PC-9 (cell line): ENCODE measurements at regions of chr1 and their contacts with region 1.

Region 1: GRCh38 chr1:202926720-202927491 is at the start of gene KLHL12:
- DNase-seq: peak; percentile 84 to 96
- H3K4me3 ChIP-seq: peak within 1 kb of the TSS; percentile 80
- H3K27ac ChIP-seq: peak within 1 kb of the TSS; percentile 74
- H3K4me1 ChIP-seq: peaks cover 14% of the 10 kb centered on the region; the same call in 1 of the 2 replicates
- H3K27me3 ChIP-seq: no peaks in the 10 kb centered on the region
- CTCF ChIP-seq: peak; percentile 80
- total RNA-seq, gene KLHL12: 29.6 and 33.1 TPM in 2 replicates

Region 2: GRCh38 chr1:202213361-202214088 is 713.4 kb before region 1 on chr1:
- CTCF ChIA-PET with region 1: interaction called, 10 read pairs
- POLR2A ChIA-PET with region 1: interaction called, 3 read pairs
- intact Hi-C with region 1: no loop called
- DNase-seq: no peak
- H3K4me3 ChIP-seq: peak overlapping the region; percentile 53; the same call in 1 of the 2 replicates
- H3K27ac ChIP-seq: no peak overlapping the region
- H3K4me1 ChIP-seq: peaks cover 4% of the 10 kb centered on the region; the same call in 1 of the 2 replicates
- H3K27me3 ChIP-seq: peaks cover 60% of the 10 kb centered on the region
- CTCF ChIP-seq: peak; percentile 63; the same call in 1 of the 2 replicates

Region 3: DNA sequence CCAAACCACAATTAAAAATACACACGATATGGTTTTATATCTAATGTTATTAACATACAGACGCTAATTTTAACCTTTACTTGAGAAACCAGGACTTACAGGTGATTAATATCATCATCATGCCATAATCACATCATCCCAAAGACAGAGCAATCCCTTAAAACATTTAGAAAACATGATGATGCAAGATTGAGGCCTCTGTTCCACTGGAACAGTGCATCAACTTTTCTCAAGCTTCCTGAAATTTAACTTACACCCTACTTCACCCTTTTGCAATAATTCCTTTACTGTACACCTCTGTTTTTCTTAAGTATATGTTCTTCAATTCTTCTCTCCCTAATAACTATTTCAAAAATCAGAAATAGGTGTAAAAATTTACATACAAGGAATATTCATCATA is 156.8 kb before region 1 on chr1:
- CTCF ChIA-PET with region 1: no interaction called
- POLR2A ChIA-PET with region 1: no interaction called
- intact Hi-C with region 1: no loop called
- DNase-seq: no peak
- H3K4me3 ChIP-seq: no peak overlapping the region
- H3K27ac ChIP-seq: no peak overlapping the region
- H3K4me1 ChIP-seq: no peaks in the 10 kb centered on the region
- H3K27me3 ChIP-seq: no peaks in the 10 kb centered on the region
- CTCF ChIP-seq: no peak

Region 4: GRCh38 chr1:202968840-202969295 is 42.0 kb after region 1 on chr1:
- CTCF ChIA-PET with region 1: interaction called, 15 read pairs
- POLR2A ChIA-PET with region 1: no interaction called
- intact Hi-C with region 1: loop called (anchors 1 kb)
- DNase-seq: peak in 1 of 2 experiments; percentile 49
- H3K4me3 ChIP-seq: no peak overlapping the region
- H3K27ac ChIP-seq: no peak overlapping the region
- H3K4me1 ChIP-seq: peaks cover 16% of the 10 kb centered on the region
- H3K27me3 ChIP-seq: no peaks in the 10 kb centered on the region; the same call in 1 of the 2 replicates
- CTCF ChIP-seq: peak; percentile 68

Region 5: GRCh38 chr1:202998836-202999750 is 72.2 kb after region 1 on chr1:
- CTCF ChIA-PET with region 1: interaction called, 8 read pairs
- POLR2A ChIA-PET with region 1: interaction called, 9 read pairs
- intact Hi-C with region 1: loop called (anchors 1 kb)
- DNase-seq: peak; percentile 54
- H3K4me3 ChIP-seq: no peak overlapping the region
- H3K27ac ChIP-seq: no peak overlapping the region
- H3K4me1 ChIP-seq: peaks cover 14% of the 10 kb centered on the region
- H3K27me3 ChIP-seq: no peaks in the 10 kb centered on the region
- CTCF ChIP-seq: peak; percentile 90

Region 6: DNA sequence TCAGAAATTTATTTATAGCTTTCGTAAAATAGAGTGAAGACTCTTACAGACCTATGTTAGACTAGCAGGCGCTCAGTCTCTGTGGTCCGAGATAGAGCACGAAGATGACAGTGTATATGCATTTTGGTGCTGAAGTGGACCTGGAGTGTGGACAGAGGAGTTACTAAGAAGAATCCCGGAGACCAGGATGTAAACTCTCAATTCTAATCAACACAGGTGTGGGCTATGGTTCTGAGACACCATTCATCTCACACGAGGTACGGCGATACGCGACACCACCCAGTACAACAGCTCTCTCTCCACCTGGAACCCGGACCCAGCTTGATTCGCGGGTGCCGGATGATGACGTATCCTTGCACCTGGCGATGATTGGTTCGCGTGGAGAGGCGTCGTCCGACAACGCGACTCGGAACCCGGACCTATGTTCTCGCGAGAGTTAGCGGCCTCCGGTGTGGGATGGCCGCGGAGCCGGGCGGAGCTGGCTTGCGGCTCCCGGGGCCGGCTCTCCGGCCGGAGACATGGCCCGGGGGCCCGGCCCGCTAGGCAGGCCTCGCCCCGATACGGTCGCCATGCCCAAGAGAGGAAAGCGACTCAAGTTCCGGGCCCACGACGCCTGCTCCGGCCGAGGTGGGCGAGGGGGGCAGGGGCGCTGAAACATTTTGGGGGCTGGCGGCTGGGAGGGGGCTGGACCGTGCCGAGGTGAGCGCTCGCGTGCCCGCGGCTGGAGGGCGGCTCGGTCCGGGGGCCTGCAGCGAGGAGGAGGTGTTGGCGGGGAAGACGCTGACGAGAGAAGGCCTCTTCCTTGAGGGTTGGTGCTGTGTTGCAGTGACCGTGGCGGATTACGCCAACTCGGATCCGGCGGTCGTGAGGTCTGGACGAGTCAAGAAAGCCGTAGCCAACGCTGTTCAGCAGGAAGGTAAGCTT is 80.3 kb after region 1 on chr1 and contains the start of gene TMEM183A:
- CTCF ChIA-PET with region 1: interaction called, 13 read pairs
- POLR2A ChIA-PET with region 1: interaction called, 5 read pairs
- intact Hi-C with region 1: no loop called
- DNase-seq: peak; percentile 90 to 94
- H3K4me3 ChIP-seq: peak within 1 kb of the TSS; percentile 69
- H3K27ac ChIP-seq: peak within 1 kb of the TSS; percentile 88
- H3K4me1 ChIP-seq: peaks cover 13% of the 10 kb centered on the region; the same call in 1 of the 2 replicates
- H3K27me3 ChIP-seq: no peaks in the 10 kb centered on the region
- CTCF ChIP-seq: no peak
- total RNA-seq, gene TMEM183A: 53.5 and 63.1 TPM in 2 replicates